ENCODE measurements at regions of chr18 and their contacts with region 1.

Region 1: DNA sequence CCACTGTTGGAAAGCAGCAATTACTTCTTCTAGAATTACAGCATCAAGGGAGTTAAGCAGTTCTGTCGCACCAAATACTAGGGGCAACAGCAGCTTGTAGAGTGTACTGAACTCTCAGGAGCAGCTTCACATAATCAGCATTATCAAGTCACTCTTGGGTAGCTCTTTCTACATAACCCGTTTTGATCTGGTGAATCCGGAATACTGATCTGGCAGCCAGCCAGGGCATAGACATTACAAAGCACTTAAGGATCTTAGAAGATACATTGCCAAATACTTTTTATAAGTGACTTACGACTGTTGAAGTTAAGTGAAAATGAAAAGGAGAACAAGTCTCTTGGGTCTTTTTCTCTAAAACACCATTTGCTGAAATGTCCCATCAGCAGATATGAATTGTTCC is 73.2 kb upstream of the NETO1 start:
- DNase-seq: peak; percentile 23
- H3K4me3 ChIP-seq: no peak overlapping the region
- H3K27ac ChIP-seq: no peak overlapping the region
- H3K4me1 ChIP-seq: no peaks in the 10 kb centered on the region
- H3K27me3 ChIP-seq: no peaks in the 10 kb centered on the region
- CTCF ChIP-seq: no peak

Region 2: GRCh38 chr18:72783530-72783929 is 157.5 kb before region 1 on chr18:
- CTCF ChIA-PET with region 1: no interaction called
- POLR2A ChIA-PET with region 1: no interaction called
- intact Hi-C with region 1: no loop called
- DNase-seq: no peak
- H3K4me3 ChIP-seq: no peak overlapping the region
- H3K27ac ChIP-seq: no peak overlapping the region
- H3K4me1 ChIP-seq: no peaks in the 10 kb centered on the region
- H3K27me3 ChIP-seq: no peaks in the 10 kb centered on the region
- CTCF ChIP-seq: no peak

Region 3: DNA sequence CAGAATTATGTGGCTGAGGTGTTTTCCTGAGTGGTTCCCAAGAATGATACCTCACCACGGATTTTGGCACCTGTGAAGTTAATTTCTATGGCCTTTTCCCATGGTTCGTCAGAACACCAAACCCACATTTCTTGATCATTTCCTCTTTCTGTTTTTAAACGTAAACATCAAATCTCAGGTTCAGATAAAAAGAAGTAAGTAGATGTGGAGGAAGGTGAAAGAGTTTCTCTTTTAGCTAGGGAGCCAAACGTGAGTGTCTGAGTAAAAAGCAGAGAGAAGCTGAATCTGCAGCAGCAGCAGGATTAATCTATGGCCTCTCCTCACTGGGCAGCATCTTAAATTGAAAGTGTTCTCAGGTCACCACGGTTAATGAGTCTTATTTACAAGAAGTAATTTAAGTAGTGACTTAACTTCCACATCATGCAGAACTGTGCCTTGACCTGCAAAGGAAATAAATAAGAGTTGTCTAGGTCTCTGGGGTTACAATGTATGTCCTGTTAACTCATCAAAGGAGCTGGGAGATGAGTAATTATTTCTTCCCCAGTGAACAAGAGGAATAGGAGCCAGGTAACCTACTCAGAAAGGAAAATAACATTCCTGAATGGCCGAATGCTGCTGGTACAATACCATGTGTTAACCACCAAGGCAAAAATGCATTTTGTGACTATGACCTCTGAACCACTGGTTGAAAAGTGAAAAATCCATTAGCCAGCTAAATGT is 66.4 kb after region 1 on chr18:
- CTCF ChIA-PET with region 1: no interaction called
- POLR2A ChIA-PET with region 1: no interaction called
- intact Hi-C with region 1: loop called (anchors 5 kb)
- DNase-seq: no peak
- H3K4me3 ChIP-seq: no peak overlapping the region
- H3K27ac ChIP-seq: no peak overlapping the region
- H3K4me1 ChIP-seq: no peaks in the 10 kb centered on the region
- H3K27me3 ChIP-seq: no peaks in the 10 kb centered on the region
- CTCF ChIP-seq: no peak

Measured in A673 (cell line).